Pancreas (tissue), 10 donors: ENCODE measurements at regions of chr20 and their contacts with region 1.

Region 1: GRCh38 chr20:20083807-20084206 is 31.5 kb downstream of the CFAP61 start:
- DNase-seq: no peak
- ATAC-seq: peak; percentile 38 to 83 (median 77)
- H3K4me3 ChIP-seq: no peak overlapping the region
- H3K27ac ChIP-seq: no peak overlapping the region
- H3K4me1 ChIP-seq: no peaks in the 10 kb centered on the region
- H3K27me3 ChIP-seq: no peaks in the 10 kb centered on the region
- CTCF ChIP-seq: peak in 3 of 4 donors; percentile 14 to 39 (median 30)

Region 2: GRCh38 chr20:19875331-19876221 is 208.2 kb before region 1 on chr20:
- intact Hi-C with region 1: no loop called
- DNase-seq: no peak
- ATAC-seq: peak in 2 of 4 donors; percentile 29 to 46
- H3K4me3 ChIP-seq: no peak overlapping the region
- H3K27ac ChIP-seq: peak overlapping the region in 1 of 4 donors; percentile 27
- H3K4me1 ChIP-seq: no peaks in the 10 kb centered on the region
- H3K27me3 ChIP-seq: no peaks in the 10 kb centered on the region
- CTCF ChIP-seq: no peak

Region 3: DNA sequence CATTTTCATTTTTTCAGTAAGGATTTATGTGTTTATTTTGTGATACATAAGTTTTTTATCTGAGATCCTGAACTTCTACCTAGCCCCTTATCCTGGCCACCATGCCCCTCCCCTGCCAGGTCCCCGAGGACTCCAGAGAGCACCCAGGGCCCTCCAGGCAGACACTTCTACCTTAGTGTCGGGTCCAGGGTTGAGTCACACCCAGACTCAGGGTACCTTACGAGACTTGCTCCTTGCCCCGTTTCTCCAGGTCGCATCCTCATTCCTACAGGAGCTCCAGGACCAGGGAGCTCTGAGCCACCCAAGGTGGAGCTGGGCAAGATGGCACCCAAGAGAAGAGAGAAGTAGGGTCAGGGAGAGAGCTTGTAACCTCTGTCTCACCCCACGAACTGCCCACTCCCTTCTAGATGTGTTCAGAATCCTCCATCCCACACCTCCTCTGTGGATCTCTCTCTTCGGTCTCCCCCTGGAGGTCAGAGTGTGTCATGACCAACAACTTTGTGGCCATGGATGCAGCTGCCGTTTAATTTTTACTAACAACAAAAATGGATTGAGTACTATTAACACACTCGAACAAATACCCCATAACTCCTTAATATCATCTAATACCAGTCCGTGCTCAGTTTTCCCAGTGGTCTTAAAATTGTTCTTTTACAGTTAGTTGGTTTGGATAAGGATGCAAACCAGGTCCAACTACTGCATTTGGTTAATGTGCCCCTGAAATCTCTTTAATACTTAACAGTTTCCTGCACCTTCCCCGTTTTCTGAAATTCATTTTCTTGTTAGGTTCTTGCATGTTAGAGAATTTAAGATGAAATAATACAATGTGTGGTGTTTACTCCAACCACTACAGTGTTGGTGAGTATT is 153.5 kb after region 1 on chr20:
- intact Hi-C with region 1: loop called in 2 of 3 experiments (anchors 5 to 10 kb)
- DNase-seq: peak in 4 of 6 donors; percentile 16 to 33 (median 22)
- ATAC-seq: peak in 3 of 4 donors; percentile 81 to 85 (median 83)
- H3K4me3 ChIP-seq: no peak overlapping the region
- H3K27ac ChIP-seq: no peak overlapping the region
- H3K4me1 ChIP-seq: no peaks in the 10 kb centered on the region
- H3K27me3 ChIP-seq: no peaks in the 10 kb centered on the region
- CTCF ChIP-seq: peak; percentile 49 to 64 (median 53)

Region 4: GRCh38 chr20:20568604-20569205 is 484.9 kb after region 1 on chr20:
- intact Hi-C with region 1: loop called in 1 of 3 experiments (anchors 10 kb)
- DNase-seq: no peak
- ATAC-seq: peak; percentile 71 to 85 (median 80)
- H3K4me3 ChIP-seq: no peak overlapping the region
- H3K27ac ChIP-seq: no peak overlapping the region
- H3K4me1 ChIP-seq: peaks cover 0 to 16% (median 16%) of the 10 kb centered on the region in 3 donors
- H3K27me3 ChIP-seq: no peaks in the 10 kb centered on the region
- CTCF ChIP-seq: peak in 2 of 4 donors; percentile 37 to 45